Heart left ventricle (tissue), 16 donors: ENCODE measurements at regions of chr3 and their contacts with region 1.

Region 1: DNA sequence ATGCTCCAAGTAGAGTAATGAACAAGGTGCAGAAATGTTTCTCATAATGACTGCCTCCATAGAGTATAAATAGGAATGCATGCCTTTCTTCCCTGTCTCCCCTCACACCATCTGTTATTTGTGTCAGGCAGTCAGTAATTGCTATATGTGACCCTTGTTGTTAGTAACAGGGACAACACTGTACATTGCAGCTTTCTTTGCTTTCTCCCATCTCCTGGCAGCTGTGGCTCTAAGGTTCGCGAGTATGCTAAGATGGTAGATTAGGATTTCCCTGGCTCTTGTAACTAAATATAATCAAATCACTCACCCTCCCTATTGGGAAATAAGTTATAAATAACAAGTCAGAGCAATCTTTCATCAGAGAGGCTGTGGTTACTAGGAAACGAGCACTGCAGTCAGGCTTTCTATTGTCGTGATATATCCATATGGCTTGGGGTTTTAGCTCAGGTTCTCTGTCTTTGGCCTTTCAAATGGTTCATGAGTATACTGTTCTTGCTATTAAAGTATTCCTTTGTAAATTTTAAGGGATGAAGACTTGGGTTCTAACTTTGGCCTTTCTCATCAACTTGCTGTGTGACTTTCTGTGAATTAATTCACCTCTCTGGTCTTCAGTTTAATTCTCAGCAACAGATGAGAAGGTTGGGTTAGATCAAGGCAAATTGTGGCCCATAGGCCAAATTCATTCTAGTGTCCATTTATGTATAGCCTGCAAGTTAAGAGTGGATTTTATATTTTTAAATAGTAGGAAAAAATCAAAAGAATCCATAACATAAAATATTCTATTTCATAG is 8.1 kb upstream of the MINDY4B start:
- DNase-seq: peak in 1 of 5 donors; percentile 39
- ATAC-seq: peak; percentile 61 to 95 (median 80)
- H3K4me3 ChIP-seq: no peak overlapping the region
- H3K27ac ChIP-seq: peak overlapping the region in 8 of 12 donors; percentile 2 to 71 (median 38)
- H3K4me1 ChIP-seq: peaks cover 0 to 9% (median 3%) of the 10 kb centered on the region in 12 donors
- H3K27me3 ChIP-seq: peaks cover 0 to 5% (median 0%) of the 10 kb centered on the region in 9 donors
- CTCF ChIP-seq: no peak
- POLR2A ChIP-seq: no peak

Region 2: DNA sequence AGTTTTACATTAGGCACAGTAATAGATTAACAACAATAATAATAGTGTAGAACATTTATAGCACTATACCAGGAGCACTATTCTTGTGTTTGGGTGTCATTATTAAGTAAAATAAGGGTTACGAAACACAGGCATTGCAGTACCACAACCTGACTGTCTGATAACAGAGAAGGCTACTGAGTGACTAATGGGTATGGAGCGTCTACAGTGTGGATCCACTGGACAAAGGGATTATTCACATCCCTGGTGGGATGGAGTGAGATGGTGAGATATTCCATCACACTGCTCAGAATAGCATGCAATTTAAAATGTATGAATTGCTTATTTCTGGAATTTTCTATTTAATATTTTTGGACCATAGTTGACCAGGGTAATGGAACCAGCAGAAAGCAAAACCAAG is 26.3 kb before region 1 on chr3:
- intact Hi-C with region 1: loop called in 1 of 10 experiments (anchors 2 kb)
- DNase-seq: no peak
- ATAC-seq: no peak
- H3K4me3 ChIP-seq: no peak overlapping the region
- H3K27ac ChIP-seq: no peak overlapping the region
- H3K4me1 ChIP-seq: peaks cover 0 to 8% (median 0%) of the 10 kb centered on the region in 12 donors
- H3K27me3 ChIP-seq: no peaks in the 10 kb centered on the region
- CTCF ChIP-seq: no peak
- POLR2A ChIP-seq: no peak